ENCODE measurements at regions of chr13 and their contacts with region 1.

Region 1: DNA sequence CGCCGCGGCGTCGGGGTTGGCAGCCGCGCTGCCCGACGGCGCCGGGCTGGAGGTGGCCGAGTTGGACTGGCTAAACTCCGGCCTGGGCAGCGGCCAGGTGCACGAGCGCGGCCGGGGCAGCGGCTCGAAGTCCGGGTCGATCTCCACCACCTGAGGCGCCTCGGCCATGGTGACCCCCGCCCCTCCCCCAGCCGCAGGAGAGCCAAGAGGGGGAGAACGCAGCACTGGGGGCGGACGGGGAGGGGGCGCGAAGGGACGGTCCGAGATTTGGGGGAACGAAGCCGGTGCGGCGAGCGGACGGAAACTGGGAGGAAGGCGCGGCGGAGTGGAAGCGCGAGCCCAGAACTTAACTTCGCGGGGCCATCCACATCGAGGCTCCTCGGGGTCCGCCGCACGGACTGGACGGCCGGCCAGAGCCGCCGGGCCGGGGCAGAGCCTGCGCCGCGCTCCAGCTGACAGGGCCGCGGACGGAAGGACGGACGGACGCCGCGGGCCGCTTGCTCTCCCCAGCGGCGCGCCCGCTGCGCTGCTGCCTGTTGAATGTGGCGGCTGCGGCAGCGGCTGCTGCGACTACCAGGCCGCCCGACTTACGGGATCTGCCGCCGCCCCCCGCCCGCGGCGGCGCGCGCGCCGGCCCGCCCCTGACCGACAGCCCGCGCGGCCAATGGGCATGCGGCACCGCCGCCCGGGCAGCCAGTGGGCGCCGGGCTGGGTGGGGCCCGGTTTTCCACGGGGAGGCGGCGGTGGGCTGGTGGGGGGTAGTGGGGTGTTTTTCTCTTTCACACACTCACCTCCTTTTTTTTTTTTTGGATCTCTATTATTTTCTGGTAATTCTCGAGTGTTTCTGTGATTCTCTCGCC is at the start of gene FOXO1:
- DNase-seq: peak; percentile 84
- H3K4me3 Mint-ChIP-seq: peak within 1 kb of the TSS; percentile 92
- H3K27ac Mint-ChIP-seq: peak within 1 kb of the TSS; percentile 94
- H3K4me1 Mint-ChIP-seq: peaks cover 40% of the 10 kb centered on the region
- H3K27me3 Mint-ChIP-seq: no peaks in the 10 kb centered on the region
- total RNA-seq, gene FOXO1: 30.9 to 32.1 TPM

Region 2: DNA sequence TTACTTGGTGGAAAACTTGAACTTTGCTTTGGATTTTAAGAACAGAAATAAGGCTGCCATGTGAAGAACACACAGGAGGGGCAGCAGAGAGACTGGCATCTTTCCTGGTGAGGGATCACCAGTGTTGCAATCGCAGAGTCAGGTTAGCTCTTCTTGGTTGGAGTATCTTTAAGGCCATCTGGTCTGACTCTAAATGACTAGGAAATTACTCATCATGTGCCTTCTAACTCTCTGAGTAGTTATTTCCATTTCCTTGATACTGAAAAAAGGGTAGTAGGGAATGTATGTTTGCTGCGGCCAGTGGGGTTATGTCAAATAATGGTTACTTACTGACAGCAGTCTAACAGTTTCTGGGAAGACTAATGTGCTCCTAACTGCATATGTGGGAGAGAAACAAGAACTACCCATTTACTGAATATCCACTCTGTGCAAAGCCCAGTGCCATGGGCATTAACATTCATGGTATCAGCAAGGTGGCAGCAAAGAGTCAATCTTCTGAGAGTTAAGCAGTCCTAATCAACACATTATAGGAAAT is 888.7 kb before region 1 on chr13:
- CTCF ChIA-PET with region 1: no interaction called
- intact Hi-C with region 1: loop called (anchors 10 kb)
- DNase-seq: peak; percentile 70
- H3K4me3 Mint-ChIP-seq: no peak overlapping the region
- H3K27ac Mint-ChIP-seq: peak overlapping the region; percentile 80
- H3K4me1 Mint-ChIP-seq: peaks cover 46% of the 10 kb centered on the region
- H3K27me3 Mint-ChIP-seq: no peaks in the 10 kb centered on the region

Region 3: DNA sequence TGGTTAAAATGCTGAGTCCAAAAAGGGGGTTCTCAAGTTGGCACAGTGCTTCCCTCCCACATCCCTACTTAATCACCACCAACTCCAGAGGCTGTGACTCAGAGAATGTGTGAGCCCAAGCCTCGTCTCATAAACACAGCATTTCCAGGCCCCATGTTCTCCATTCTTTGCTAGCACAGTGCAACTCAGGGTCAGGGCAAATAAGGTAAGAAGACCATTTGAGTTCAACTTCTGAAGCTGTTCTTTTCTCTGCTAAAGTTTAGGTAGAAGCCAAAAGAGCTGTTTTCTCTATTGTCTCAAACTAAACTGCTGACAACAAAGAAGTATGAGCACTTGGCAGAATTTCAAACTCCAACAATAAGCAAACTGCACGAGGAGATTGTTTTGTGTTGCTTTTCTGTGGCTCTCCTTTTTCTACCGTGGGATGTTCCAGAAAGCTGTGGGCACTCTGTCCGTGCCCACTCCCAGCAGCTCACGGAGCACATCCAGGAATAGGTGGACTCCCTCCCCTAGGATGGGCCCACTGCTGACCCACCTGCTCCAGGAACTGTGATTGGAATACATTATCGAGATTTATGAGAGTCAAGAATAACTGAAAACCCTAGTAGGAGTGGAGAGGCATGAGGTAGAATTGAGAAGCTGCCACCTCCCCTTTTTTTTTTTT is 516.5 kb before region 1 on chr13:
- CTCF ChIA-PET with region 1: no interaction called
- intact Hi-C with region 1: loop called (anchors 1 kb)
- DNase-seq: peak; percentile 37
- H3K4me3 Mint-ChIP-seq: no peak overlapping the region
- H3K27ac Mint-ChIP-seq: peak overlapping the region; percentile 52
- H3K4me1 Mint-ChIP-seq: peaks cover 73% of the 10 kb centered on the region
- H3K27me3 Mint-ChIP-seq: no peaks in the 10 kb centered on the region

Region 4: DNA sequence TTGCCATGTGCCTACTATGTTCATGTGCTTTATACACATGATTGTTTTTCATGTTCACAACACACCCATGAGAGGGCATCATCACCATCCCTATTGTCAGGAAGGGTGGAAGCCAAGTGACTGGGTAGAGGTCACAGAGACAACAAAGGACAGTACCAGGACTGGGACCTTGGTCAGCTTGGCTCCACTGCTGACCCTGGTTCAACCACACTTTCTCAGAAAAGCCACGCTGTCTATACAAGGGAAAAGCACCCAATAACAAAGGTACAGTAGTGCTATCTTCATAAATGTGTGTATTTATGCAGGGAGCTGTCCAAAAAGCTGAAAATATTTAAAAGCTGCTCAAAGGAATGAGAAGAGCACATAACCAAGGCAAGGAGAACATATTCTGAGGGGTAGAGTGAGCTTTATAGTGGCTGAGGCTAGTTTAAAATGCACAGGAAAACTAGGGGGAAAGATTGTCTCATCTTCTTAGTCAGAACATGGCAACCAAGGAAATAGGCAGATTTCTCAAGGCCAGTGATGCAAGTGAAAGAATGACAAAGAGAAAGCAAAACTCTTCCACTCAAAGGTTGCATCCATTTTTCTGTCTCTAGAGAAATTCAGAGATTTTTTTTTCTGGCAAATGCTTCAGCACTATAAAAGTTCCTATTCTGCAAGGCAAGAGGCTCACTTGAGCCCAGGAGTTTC is 414.8 kb before region 1 on chr13:
- CTCF ChIA-PET with region 1: no interaction called
- intact Hi-C with region 1: loop called (anchors 2 kb)
- DNase-seq: peak; percentile 28
- H3K4me3 Mint-ChIP-seq: no peak overlapping the region
- H3K27ac Mint-ChIP-seq: peak overlapping the region; percentile 88
- H3K4me1 Mint-ChIP-seq: peaks cover 52% of the 10 kb centered on the region
- H3K27me3 Mint-ChIP-seq: no peaks in the 10 kb centered on the region

Region 5: DNA sequence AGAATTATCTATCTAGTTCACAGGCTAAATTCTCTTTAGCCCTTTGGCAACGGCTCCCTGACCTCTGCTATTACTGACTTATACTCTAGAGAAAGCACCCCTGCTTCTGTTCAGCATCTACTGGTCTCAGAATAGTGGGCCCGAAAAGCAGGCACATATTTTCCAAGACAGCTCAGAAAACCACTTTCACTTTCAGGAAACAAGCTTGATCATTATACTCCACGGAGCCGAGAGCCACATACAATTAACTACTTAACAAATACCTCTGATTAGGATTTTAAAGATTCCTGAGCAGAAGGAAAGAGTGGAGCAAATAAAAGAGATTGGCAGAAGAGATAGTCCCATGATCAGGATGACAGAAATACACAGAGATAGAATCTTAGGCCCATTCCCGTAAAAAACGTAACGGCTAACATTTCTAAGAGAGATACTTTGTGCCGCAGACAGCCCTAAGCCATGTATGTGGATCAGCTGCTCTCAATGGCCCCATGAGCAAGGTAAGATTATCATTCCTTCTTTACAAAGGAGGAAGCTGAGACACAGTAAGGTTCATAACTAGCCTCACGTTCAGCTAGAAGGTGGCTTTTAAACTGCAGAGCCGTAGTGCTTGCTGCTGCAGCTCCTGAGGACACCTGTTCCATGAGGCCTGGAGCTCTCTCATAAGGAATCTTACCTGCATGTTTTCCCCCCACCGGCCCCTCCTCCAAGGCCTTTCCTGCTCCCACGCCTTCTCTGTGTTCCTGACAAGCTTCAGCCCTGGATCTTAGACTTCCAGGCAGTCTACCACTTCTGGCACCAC is 227.1 kb before region 1 on chr13:
- CTCF ChIA-PET with region 1: no interaction called
- intact Hi-C with region 1: loop called (anchors 1 kb)
- DNase-seq: peak; percentile 54
- H3K4me3 Mint-ChIP-seq: peak overlapping the region; percentile 33
- H3K27ac Mint-ChIP-seq: peak overlapping the region; percentile 46
- H3K4me1 Mint-ChIP-seq: peaks cover 40% of the 10 kb centered on the region
- H3K27me3 Mint-ChIP-seq: no peaks in the 10 kb centered on the region

Region 6: GRCh38 chr13:40613192-40613818 is 53.0 kb before region 1 on chr13:
- CTCF ChIA-PET with region 1: interaction called, 5 read pairs
- intact Hi-C with region 1: loop called (anchors 1 kb)
- DNase-seq: peak; percentile 73
- H3K4me3 Mint-ChIP-seq: peak overlapping the region; percentile 71
- H3K27ac Mint-ChIP-seq: peak overlapping the region; percentile 95
- H3K4me1 Mint-ChIP-seq: peaks cover 93% of the 10 kb centered on the region
- H3K27me3 Mint-ChIP-seq: no peaks in the 10 kb centered on the region

Region 7: GRCh38 chr13:40706439-40706838 is 40.2 kb after region 1 on chr13:
- CTCF ChIA-PET with region 1: no interaction called
- intact Hi-C with region 1: no loop called
- DNase-seq: peak; percentile 15
- H3K4me3 Mint-ChIP-seq: no peak overlapping the region
- H3K27ac Mint-ChIP-seq: no peak overlapping the region
- H3K4me1 Mint-ChIP-seq: peaks cover 12% of the 10 kb centered on the region
- H3K27me3 Mint-ChIP-seq: no peaks in the 10 kb centered on the region

Region 8: GRCh38 chr13:40813661-40814454 is 147.6 kb after region 1 on chr13:
- CTCF ChIA-PET with region 1: no interaction called
- intact Hi-C with region 1: no loop called
- DNase-seq: no peak
- H3K4me3 Mint-ChIP-seq: no peak overlapping the region
- H3K27ac Mint-ChIP-seq: no peak overlapping the region
- H3K4me1 Mint-ChIP-seq: no peaks in the 10 kb centered on the region
- H3K27me3 Mint-ChIP-seq: no peaks in the 10 kb centered on the region

Region 9: DNA sequence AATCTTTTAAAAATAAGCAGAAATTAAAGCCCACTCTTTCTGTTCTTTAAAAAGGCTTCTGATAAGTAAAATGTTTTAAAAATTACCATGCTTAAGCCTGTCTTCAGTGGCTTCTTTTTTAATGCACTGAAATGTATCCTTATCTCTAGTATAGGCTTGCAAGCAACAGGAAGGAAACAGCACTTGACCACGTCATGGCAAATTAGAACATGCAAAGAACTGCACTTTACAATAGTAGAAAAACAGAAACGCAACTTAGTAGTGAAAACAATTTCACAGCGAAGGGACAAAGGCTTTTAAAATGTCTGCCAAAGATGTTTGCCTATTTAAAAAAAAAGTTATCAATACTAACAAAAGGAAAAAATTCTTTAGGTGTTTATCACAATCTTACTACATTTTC is 316.5 kb after region 1 on chr13:
- CTCF ChIA-PET with region 1: no interaction called
- intact Hi-C with region 1: loop called (anchors 5 kb)
- DNase-seq: peak; percentile 60
- H3K4me3 Mint-ChIP-seq: peak overlapping the region; percentile 90
- H3K27ac Mint-ChIP-seq: peak overlapping the region; percentile 100
- H3K4me1 Mint-ChIP-seq: peaks cover 55% of the 10 kb centered on the region
- H3K27me3 Mint-ChIP-seq: no peaks in the 10 kb centered on the region